Spleen (tissue), 13 donors: ENCODE measurements at regions of chr15 and their contacts with region 1.

Region 1: DNA sequence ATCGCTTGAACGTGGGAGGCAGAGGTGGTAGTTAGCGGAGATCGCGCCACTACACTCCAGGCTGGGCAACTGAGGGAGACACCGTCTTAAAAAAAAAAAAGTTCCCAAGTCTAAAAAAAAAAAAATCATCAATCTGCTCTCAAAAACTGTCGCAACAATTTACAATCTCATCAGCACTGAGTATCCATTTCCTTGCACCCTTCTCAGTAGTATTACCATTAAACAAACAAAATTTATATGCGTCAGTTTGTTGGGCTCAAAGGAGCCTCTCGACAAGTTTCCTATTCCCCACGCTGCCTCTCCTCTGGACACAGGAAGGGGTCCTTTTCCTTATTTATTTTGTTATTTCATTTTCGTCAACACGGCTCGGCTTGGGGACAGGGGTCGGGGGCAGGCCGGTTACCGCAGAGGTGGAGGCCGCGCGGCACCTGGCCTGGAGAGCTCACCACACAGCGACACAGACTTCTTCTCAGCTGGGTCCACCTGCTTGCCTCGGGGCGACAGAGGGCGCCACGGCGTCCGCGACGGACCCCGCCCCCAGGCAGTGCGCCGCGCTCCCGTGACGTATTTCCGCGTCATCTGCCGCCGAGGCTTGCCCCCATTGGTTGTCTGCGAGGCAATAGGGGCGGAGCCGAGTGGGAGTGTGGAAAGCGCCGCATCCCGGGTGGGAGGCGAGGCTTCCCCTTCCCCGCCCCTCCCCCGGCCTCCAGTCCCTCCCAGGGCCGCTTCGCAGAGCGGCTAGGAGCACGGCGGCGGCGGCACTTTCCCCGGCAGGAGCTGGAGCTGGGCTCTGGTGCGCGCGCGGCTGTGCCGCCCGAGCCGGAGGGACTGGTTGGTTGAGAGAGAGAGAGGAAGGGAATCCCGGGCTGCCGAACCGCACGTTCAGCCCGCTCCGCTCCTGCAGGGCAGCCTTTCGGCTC is at the start of gene MAP2K1:
- DNase-seq: peak; percentile 99
- H3K4me3 ChIP-seq: peak within 1 kb of the TSS; percentile 80 to 97 (median 93)
- H3K27ac ChIP-seq: peak within 1 kb of the TSS; percentile 87 to 98 (median 94)
- H3K4me1 ChIP-seq: peaks cover 37 to 61% (median 55%) of the 10 kb centered on the region in 6 donors
- H3K27me3 ChIP-seq: no peaks in the 10 kb centered on the region
- CTCF ChIP-seq: peak; percentile 68 to 91 (median 85)
- POLR2A ChIP-seq: peak in 2 of 3 donors; percentile 7 to 63
- total RNA-seq, gene MAP2K1: 36.3 to 56.9 (median 47.4) TPM

Region 2: GRCh38 chr15:66452971-66453580 is 66.6 kb after region 1 on chr15:
- intact Hi-C with region 1: no loop called
- DNase-seq: no peak
- H3K4me3 ChIP-seq: no peak overlapping the region
- H3K27ac ChIP-seq: peak overlapping the region in 1 of 8 donors; percentile 26
- H3K4me1 ChIP-seq: no peaks in the 10 kb centered on the region
- H3K27me3 ChIP-seq: no peaks in the 10 kb centered on the region
- CTCF ChIP-seq: no peak
- POLR2A ChIP-seq: no peak

Region 3: DNA sequence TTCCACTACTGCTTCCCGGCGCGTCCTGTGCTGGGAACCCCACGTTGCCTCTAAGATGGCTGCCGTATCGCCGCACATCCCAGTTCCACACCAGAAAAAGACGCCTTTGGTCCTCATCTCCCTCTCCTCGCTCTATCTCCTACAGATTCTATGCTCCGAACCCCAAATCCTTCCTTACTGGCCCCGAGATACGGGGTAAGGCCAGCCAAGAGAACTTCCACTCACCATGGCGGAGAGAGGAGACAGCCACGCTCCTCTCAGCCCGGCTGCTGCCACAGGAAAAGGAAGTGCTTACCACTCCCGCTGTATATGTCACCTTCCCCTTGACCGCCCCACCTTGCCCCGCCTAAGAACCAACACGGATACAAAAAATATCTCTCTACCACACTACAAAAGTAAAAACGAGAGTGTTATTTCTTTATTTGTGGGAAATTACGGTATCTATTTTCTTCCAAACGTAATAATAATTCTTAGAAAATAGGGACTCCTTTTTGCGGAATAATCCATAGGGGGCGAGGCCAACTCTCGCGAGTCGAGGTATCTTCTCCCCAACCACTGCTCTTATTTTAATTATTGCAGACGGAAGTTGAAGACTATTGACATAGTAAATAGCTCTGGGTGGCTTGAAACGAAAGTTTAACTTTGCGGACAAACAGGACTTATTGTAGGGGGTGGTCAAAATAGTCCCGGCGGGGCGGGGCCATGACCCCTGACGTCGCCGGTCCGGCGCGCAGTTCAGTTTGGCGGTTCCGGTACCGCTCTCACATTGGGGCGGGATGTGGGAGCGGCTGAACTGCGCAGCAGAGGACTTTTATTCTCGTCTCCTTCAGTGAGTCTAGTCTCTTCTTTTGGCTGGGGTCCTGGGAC is 118.3 kb after region 1 on chr15 and contains the starts of genes RPL4 and ZWILCH:
- intact Hi-C with region 1: loop called (anchors 5 kb)
- DNase-seq: peak; percentile 94
- H3K4me3 ChIP-seq: peak within 1 kb of the TSS; percentile 79 to 99 (median 94)
- H3K27ac ChIP-seq: peak within 1 kb of the TSS; percentile 87 to 97 (median 95)
- H3K4me1 ChIP-seq: peaks cover 19 to 59% (median 40%) of the 10 kb centered on the region in 6 donors
- H3K27me3 ChIP-seq: no peaks in the 10 kb centered on the region
- CTCF ChIP-seq: peak in 6 of 11 experiments; percentile 9 to 36 (median 22)
- POLR2A ChIP-seq: peak; percentile 77 to 94 (median 90)
- total RNA-seq, gene RPL4: 1,508 to 3,988 (median 2,104) TPM
- total RNA-seq, gene ZWILCH: 5.6 to 12.8 (median 9.0) TPM